Activated T-helper 2 cell treated with anti-CD3 and anti-CD28 coated beads, Interferon-gamma antibody, Interleukin-2, Interleukin-4, amounts not matched to agents 10 μg/mL and 5 μg/mL and 100 μg/mL, durations not matched to agents 14 hours and 24 hours and 36 hours (primary cell): ENCODE measurements at regions of chr1 and their contacts with region 1.

Region 1: GRCh38 chr1:15835741-15836510 is 11.6 kb upstream of the SPEN start:
- DNase-seq: peak; percentile 98
- H3K4me3 Mint-ChIP-seq: peak overlapping the region; percentile 88
- H3K27ac Mint-ChIP-seq: peak overlapping the region; percentile 97
- H3K4me1 Mint-ChIP-seq: peaks cover 18% of the 10 kb centered on the region
- H3K27me3 Mint-ChIP-seq: no peaks in the 10 kb centered on the region

Region 2: GRCh38 chr1:15526490-15527339 is 309.2 kb before region 1 on chr1 and contains the start of gene DNAJC16:
- intact Hi-C with region 1: loop called (anchors 2 kb)
- DNase-seq: peak; percentile 99
- H3K4me3 Mint-ChIP-seq: peak within 1 kb of the TSS; percentile 87
- H3K27ac Mint-ChIP-seq: peak within 1 kb of the TSS; percentile 98
- H3K4me1 Mint-ChIP-seq: peaks cover 44% of the 10 kb centered on the region
- H3K27me3 Mint-ChIP-seq: no peaks in the 10 kb centered on the region
- total RNA-seq, gene DNAJC16: 10.9 and 18.7 TPM in 2 replicates

Region 3: GRCh38 chr1:15760520-15761211 is 75.3 kb before region 1 on chr1:
- intact Hi-C with region 1: no loop called
- DNase-seq: no peak
- H3K4me3 Mint-ChIP-seq: no peak overlapping the region
- H3K27ac Mint-ChIP-seq: no peak overlapping the region
- H3K4me1 Mint-ChIP-seq: peaks cover 2% of the 10 kb centered on the region
- H3K27me3 Mint-ChIP-seq: peaks cover 46% of the 10 kb centered on the region

Region 4: DNA sequence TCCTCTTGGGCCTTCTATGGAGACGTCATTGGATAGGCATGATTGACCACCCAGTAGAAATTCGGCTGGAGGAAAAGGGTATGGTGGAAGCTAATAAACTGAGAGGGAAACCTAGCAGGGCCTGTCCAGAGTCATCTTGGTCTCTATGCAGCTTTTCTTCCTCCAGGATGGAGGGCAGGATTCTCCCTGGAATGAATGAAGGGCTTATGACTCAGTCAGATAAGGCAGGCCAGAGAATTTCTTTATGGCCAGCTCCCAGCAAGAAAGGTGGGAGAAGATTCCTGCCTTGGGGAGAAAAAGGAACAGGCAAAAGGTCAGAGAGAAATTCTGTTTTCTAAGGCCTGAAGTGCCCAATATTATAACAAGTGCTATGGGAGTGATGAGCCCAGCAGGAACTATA is 60.2 kb before region 1 on chr1:
- intact Hi-C with region 1: no loop called
- DNase-seq: no peak
- H3K4me3 Mint-ChIP-seq: no peak overlapping the region
- H3K27ac Mint-ChIP-seq: no peak overlapping the region
- H3K4me1 Mint-ChIP-seq: no peaks in the 10 kb centered on the region
- H3K27me3 Mint-ChIP-seq: peaks cover 4% of the 10 kb centered on the region

Region 5: DNA sequence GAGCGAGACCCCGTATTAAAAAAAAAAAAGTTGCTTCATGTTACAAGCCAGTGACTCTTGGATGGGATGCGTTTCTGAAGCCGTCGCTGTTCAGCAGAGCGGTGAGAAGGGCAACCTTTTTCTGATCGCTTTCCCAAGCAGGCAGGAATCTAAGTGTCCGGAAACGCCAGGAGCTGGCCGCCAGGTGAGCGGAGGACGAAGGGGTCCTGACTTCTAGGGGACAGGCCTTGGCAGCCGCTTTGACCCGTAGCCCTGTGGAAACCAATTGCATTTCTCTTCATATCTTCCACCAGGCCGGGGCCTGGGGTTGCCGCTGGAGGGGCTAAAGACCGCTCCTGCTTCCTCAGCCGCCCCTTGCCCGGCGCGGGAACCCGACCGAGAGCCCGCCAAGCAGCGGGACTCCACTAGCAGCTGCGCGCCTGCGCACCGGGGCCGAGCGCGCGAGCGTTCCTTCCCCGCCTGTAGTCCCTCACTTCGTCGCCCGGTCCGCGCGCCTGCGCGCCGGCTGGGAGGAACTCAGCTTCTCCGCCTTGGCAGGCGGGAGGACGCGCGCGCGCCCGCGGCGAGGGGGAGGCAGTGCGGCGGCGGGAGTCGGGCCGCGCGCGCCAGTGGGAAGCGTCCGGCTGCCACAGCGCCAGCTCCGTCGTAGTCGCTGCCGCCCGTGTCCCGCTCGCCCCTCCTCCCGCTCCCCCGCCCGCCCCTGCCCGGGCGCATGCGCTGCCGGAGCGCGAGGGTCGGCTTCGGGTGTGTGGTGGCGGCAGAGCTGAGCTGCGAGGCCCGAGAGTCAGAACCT is 11.4 kb after region 1 on chr1 and contains the start of gene SPEN:
- intact Hi-C with region 1: loop called (anchors 1 kb)
- DNase-seq: peak; percentile 98
- H3K4me3 Mint-ChIP-seq: peak within 1 kb of the TSS; percentile 99
- H3K27ac Mint-ChIP-seq: peak within 1 kb of the TSS; percentile 92
- H3K4me1 Mint-ChIP-seq: peaks cover 46% of the 10 kb centered on the region
- H3K27me3 Mint-ChIP-seq: no peaks in the 10 kb centered on the region
- total RNA-seq, gene SPEN: 75.0 and 75.9 TPM in 2 replicates

Region 6: DNA sequence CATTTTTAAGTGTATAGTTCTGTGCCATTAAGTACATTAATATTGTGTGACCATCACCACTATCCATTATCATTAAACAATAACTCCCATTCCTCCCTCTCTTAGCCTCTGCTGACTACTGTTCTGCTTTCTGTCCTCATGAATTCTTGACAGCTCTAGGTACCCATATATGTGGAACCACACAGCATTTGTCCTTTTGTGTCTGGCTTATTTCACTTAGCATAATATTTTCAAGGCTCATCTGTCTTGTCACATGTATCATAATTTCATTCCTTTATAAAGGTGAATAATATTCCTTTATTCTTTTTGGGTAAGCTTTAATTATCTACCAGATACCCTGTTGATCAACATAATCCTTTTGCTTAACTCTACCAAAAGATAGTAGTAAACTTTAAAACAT is 59.3 kb after region 1 on chr1:
- intact Hi-C with region 1: no loop called
- DNase-seq: no peak
- H3K4me3 Mint-ChIP-seq: no peak overlapping the region
- H3K27ac Mint-ChIP-seq: no peak overlapping the region
- H3K4me1 Mint-ChIP-seq: peaks cover 28% of the 10 kb centered on the region
- H3K27me3 Mint-ChIP-seq: no peaks in the 10 kb centered on the region

Region 7: GRCh38 chr1:15918962-15919715 is 83.2 kb after region 1 on chr1:
- intact Hi-C with region 1: loop called (anchors 1 kb)
- DNase-seq: peak; percentile 56
- H3K4me3 Mint-ChIP-seq: peak overlapping the region; percentile 55
- H3K27ac Mint-ChIP-seq: peak overlapping the region; percentile 69
- H3K4me1 Mint-ChIP-seq: peaks cover 36% of the 10 kb centered on the region
- H3K27me3 Mint-ChIP-seq: no peaks in the 10 kb centered on the region

Region 8: DNA sequence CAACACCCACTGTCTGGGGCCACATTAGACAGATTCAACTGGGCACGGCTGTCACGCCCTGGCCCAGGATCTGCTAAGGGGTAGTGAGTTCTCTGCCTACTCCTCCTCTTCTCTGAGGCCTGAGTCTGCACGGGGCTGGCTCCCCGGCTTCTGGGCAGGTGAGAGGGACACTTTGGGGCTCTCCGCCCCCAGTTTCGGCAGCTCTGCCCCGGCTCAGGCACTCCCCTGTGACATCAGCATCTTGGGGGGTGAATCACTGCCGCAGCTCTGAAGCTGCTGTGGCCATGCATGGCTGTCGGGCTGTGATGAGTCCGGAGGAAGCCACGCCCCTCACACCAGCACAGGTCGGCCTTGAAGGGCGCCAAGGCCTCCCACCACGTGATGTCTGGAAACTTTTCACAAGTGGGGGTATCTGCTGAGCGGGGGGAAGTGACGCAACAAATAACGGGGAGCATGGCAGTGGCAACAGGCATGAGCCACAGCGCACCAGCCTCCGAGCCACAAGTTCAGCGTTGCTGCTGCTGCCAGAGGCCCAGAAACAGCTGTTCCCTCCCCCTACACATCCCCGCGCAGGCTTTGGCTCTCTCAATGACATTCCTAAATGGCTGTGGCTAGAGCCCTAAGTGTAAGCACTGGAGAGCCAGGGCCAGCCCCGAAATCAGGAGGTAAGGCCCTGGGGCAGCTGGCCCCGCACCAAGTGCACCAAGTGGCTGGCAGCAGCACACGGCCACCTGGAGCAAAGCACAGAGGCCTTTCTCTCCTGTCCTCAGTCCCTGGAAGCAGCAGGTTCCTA is 113.7 kb after region 1 on chr1:
- intact Hi-C with region 1: loop called (anchors 2 kb)
- DNase-seq: peak; percentile 45
- H3K4me3 Mint-ChIP-seq: peak overlapping the region; percentile 54
- H3K27ac Mint-ChIP-seq: peak overlapping the region; percentile 98
- H3K4me1 Mint-ChIP-seq: peaks cover 66% of the 10 kb centered on the region
- H3K27me3 Mint-ChIP-seq: no peaks in the 10 kb centered on the region

Region 9: DNA sequence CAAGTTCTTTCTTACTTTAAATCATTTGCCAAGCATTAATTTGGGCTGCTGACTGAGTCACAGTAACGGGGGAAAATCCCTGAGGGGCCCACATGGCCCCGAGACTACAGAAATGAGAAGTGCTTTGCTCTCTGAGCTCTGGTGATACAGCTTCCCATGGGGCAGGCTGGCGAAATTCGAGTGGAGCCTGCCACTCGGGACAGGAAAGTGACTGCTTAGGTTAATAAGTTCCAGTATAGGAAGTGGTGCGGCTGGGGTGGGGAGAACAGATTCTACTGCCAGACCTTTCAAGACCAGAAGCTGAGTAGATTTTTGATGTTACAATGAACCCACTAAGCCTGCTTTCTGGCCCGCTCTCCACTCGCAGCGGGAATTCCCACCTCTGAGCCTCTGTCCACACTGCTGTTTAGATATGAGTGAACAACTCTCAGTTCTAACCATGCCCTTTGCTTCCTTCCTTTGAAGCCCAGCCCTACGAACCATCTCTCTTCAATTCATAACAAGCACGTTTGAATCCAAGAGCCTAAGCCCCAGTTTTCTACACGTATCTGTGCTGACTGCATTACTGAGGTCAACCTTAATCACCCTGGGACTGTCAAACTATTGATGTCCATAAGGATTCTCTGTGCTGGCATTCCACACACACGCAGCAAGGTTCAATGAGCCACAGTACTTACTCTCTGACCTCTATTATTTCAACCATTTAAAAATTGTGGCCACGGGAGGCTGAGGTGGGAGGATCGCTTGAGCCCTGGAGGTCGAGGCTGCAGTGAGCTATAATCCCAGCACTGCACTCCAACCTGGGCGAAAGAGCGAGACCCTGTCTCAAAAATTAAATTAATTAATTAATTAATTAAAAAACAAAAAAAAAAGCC is 130.4 kb after region 1 on chr1:
- intact Hi-C with region 1: loop called (anchors 1 kb)
- DNase-seq: peak; percentile 59
- H3K4me3 Mint-ChIP-seq: peak overlapping the region; percentile 77
- H3K27ac Mint-ChIP-seq: peak overlapping the region; percentile 99
- H3K4me1 Mint-ChIP-seq: peaks cover 63% of the 10 kb centered on the region
- H3K27me3 Mint-ChIP-seq: no peaks in the 10 kb centered on the region